A549 (cell line): ENCODE measurements at regions of chr1 and their contacts with region 1.

Region 1: GRCh38 chr1:159122005-159122621 is 45.5 kb upstream of the AIM2 start:
- DNase-seq: no peak
- ATAC-seq: no peak
- H3K4me3 ChIP-seq: no peak overlapping the region
- H3K27ac ChIP-seq: no peak overlapping the region
- H3K4me1 ChIP-seq: no peaks in the 10 kb centered on the region
- CTCF ChIP-seq: no peak
- EP300 ChIP-seq: no peak
- POLR2A ChIP-seq: no peak
- RAD21 ChIP-seq: no peak

Region 2: DNA sequence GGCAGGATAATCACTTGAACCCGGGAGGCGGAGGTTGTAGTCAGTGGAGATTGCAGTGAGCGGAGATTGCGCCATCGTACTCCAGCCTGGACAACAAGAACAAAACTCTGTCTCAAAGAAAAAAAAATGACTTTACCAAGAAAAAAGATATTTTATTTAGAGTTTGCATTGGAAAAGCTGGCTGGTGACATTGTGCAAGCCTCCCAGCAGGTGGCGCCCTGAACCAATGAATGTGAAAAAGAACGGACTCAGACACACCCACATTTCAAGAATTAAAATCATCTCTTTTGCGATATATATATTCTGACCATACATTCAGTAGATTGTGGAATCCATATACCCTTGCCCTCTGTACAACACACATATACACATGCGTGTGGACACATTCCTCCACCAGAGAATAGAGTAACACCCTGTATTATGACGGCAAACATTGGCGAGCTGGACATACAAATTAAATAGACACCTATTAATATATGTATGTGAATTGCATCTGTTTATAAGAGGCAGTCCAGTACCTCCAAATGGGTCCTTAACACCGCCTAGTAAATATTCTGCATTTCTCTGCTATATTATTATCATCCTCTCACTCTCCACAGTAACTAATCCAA is 10.3 kb after region 1 on chr1:
- CTCF ChIA-PET with region 1: interaction called, 27 read pairs
- POLR2A ChIA-PET with region 1: no interaction called
- DNase-seq: peak; percentile 59 to 61
- ATAC-seq: peak; percentile 68 to 81; a peak in 3 of 6 replicates
- H3K4me3 ChIP-seq: no peak overlapping the region
- H3K27ac ChIP-seq: no peak overlapping the region
- H3K4me1 ChIP-seq: no peaks in the 10 kb centered on the region
- CTCF ChIP-seq: peak; percentile 88
- EP300 ChIP-seq: no peak
- POLR2A ChIP-seq: no peak
- RAD21 ChIP-seq: peak; percentile 84 to 85